GM18951 (cell line): ENCODE measurements at regions of chr20 and their contacts with region 1.

Region 1: DNA sequence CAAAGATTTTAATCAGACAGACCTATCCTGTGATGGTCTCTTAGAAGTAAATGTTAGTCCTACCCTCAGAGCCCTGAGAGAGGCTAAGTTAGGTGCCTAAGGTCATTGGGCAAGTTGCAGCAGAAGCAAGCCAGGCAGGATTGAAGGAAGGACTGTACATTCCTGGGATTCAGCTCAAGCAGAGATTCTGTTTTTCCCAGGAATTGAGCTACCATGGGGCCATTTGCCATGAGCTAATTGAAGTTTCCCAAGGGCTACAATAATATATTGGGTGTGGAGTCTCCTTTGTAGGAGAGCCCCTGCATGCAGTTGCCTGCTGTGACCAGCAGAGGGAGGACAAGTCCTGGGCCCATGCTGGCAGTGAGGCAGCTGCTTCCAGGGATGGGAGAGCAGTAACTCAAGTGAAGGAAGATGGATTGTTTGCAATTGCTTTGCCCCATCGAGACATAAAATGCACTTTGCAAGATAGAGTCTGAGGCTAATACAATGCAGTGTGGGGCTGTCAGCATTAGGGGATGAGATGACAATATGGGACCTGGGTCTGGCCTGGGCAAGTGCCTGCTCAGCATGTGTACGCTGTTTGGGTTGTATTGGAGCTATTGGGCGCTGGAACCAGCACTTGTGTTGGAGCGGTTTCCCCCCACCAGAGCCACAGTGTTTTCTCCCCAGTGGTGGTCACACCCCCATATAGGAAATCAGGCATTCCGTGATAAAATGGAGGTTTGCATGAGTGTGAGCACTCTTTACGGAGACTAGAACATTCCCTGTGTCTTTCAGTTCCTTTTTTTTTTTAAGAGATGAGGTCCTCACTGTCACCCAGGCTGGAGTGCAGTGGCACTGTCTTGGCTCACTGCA is 27.9 kb downstream of the DNMT3B start:
- POLR2A ChIP-seq: no peak

Region 2: DNA sequence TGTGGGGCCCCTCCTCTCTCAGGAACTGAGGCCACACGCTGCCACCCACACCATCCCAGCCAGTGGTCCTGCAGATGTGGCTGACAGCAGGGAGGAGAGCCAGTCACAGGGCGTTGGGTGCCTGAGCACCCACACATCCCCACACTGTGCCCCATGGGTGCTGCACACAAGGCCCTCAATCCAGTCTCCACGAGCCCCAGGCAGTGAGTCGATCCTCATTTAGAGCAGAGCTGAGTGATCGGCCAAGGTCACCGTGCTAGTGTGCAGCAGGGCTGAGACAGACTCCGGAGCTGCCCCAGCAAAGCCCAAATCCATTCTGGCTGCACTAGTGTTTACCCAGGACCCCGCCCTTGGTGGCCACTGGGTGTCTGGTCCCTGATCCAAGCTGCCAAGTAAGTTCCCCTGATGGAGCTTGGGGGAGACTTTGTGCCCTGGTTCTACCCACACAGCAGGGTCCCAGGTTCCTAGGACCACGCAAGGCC is 125.4 kb before region 1 on chr20:
- in situ Hi-C with region 1: loop called (anchors 10 kb)
- POLR2A ChIP-seq: no peak